Naive thymus-derived CD4-positive, alpha-beta T cell (primary cell): ENCODE measurements at regions of chr1 and their contacts with region 1.

Region 1: GRCh38 chr1:117137316-117137855 is 15.8 kb upstream of the TRIM45 start:
- DNase-seq: no peak
- ATAC-seq: no peak
- H3K4me3 ChIP-seq: no peak overlapping the region
- H3K4me3 Mint-ChIP-seq: no peak overlapping the region
- H3K27ac ChIP-seq: no peak overlapping the region
- H3K27ac Mint-ChIP-seq: no peak overlapping the region
- H3K4me1 ChIP-seq: no peaks in the 10 kb centered on the region
- H3K4me1 Mint-ChIP-seq: peaks cover 0 to 3% (median 0%) of the 10 kb centered on the region in 7 donors
- H3K27me3 ChIP-seq: no peaks in the 10 kb centered on the region
- H3K27me3 Mint-ChIP-seq: peaks cover 5 to 26% (median 23%) of the 10 kb centered on the region in 5 donors

Region 2: DNA sequence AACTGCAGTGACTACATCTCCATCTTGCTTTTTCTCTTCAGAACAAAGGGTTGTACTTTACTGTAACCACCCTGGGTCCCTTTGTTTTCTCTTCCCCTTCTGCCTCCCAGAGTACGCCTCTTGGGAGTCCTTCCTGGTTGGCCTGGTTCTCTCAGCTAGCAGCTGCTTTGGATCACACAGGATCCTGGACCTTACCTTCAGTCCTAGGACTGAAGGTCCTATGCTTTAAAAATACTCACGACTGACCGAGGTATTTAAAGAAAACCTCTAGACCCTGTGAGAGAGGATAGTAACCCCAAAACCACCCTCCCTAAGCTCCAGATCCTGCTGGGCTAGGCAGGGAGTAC is 20.6 kb before region 1 on chr1:
- CTCF ChIA-PET with region 1: interaction called, 3 read pairs
- POLR2A ChIA-PET with region 1: no interaction called
- intact Hi-C with region 1: loop called in 1 of 2 experiments (anchors 2 kb)
- DNase-seq: no peak
- ATAC-seq: no peak
- H3K4me3 ChIP-seq: no peak overlapping the region
- H3K4me3 Mint-ChIP-seq: no peak overlapping the region
- H3K27ac ChIP-seq: no peak overlapping the region
- H3K27ac Mint-ChIP-seq: no peak overlapping the region
- H3K4me1 ChIP-seq: peaks cover 0 to 4% of the 10 kb centered on the region in 2 donors
- H3K4me1 Mint-ChIP-seq: peaks cover 0 to 6% (median 4%) of the 10 kb centered on the region in 7 donors
- H3K27me3 ChIP-seq: no peaks in the 10 kb centered on the region
- H3K27me3 Mint-ChIP-seq: peaks cover 0 to 8% (median 0%) of the 10 kb centered on the region in 5 donors

Region 3: DNA sequence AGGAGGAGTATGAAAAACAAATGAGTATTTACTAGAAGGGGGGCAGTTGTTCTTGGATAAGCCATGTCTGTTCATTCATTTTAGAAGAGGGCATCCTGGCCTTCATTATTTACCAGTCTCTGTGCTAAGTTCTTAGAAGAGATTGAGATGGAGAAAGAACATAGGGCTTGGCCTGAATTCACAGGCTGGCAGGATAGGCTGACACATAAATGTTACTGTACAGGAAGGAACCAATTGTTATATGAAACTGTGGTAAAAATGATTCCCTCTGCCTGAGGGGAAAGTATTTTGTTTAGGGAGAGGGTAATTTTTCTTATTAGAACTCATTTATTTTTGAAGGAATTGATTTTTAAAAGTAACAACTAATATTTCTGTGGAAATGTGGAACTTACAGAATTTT is 329.4 kb after region 1 on chr1:
- CTCF ChIA-PET with region 1: no interaction called
- POLR2A ChIA-PET with region 1: no interaction called
- intact Hi-C with region 1: no loop called
- DNase-seq: no peak
- ATAC-seq: no peak
- H3K4me3 ChIP-seq: no peak overlapping the region
- H3K4me3 Mint-ChIP-seq: no peak overlapping the region
- H3K27ac ChIP-seq: no peak overlapping the region
- H3K27ac Mint-ChIP-seq: no peak overlapping the region
- H3K4me1 ChIP-seq: no peaks in the 10 kb centered on the region
- H3K4me1 Mint-ChIP-seq: peaks cover 0 to 7% (median 0%) of the 10 kb centered on the region in 7 donors
- H3K27me3 ChIP-seq: no peaks in the 10 kb centered on the region
- H3K27me3 Mint-ChIP-seq: no peaks in the 10 kb centered on the region

Region 4: GRCh38 chr1:117537291-117537920 is 400.0 kb after region 1 on chr1:
- CTCF ChIA-PET with region 1: no interaction called
- POLR2A ChIA-PET with region 1: no interaction called
- intact Hi-C with region 1: no loop called
- DNase-seq: peak in 2 of 9 donors; percentile 14 to 15
- ATAC-seq: no peak
- H3K4me3 ChIP-seq: no peak overlapping the region
- H3K4me3 Mint-ChIP-seq: no peak overlapping the region
- H3K27ac ChIP-seq: no peak overlapping the region
- H3K27ac Mint-ChIP-seq: no peak overlapping the region
- H3K4me1 ChIP-seq: peaks cover 7 to 8% of the 10 kb centered on the region in 2 donors
- H3K4me1 Mint-ChIP-seq: peaks cover 0 to 20% (median 3%) of the 10 kb centered on the region in 7 donors
- H3K27me3 ChIP-seq: no peaks in the 10 kb centered on the region
- H3K27me3 Mint-ChIP-seq: no peaks in the 10 kb centered on the region

Region 5: GRCh38 chr1:117612517-117613248 is 475.3 kb after region 1 on chr1:
- CTCF ChIA-PET with region 1: no interaction called
- POLR2A ChIA-PET with region 1: no interaction called
- intact Hi-C with region 1: no loop called
- DNase-seq: no peak
- ATAC-seq: peak; percentile 29
- H3K4me3 ChIP-seq: no peak overlapping the region
- H3K4me3 Mint-ChIP-seq: no peak overlapping the region
- H3K27ac ChIP-seq: no peak overlapping the region
- H3K27ac Mint-ChIP-seq: no peak overlapping the region
- H3K4me1 ChIP-seq: peaks cover 15 to 83% of the 10 kb centered on the region in 2 donors
- H3K4me1 Mint-ChIP-seq: peaks cover 43 to 79% (median 63%) of the 10 kb centered on the region in 7 donors
- H3K27me3 ChIP-seq: no peaks in the 10 kb centered on the region
- H3K27me3 Mint-ChIP-seq: peaks cover 0 to 12% (median 0%) of the 10 kb centered on the region in 5 donors